ENCODE measurements at regions of chr16 and their contacts with region 1.

Region 1: GRCh38 chr16:22318690-22319358 is 21.6 kb downstream of the POLR3E start:
- H3K4me3 ChIP-seq: no peak overlapping the region
- H3K27ac ChIP-seq: no peak overlapping the region
- H3K4me1 ChIP-seq: no peaks in the 10 kb centered on the region
- CTCF ChIP-seq: peak; percentile 72

Region 2: GRCh38 chr16:21158208-21159110 is 1160.4 kb before region 1 on chr16 and contains the start of gene LDAF1:
- CTCF ChIA-PET with region 1: interaction called, 18 read pairs
- POLR2A ChIA-PET with region 1: no interaction called
- H3K4me3 ChIP-seq: peak within 1 kb of the TSS; percentile 69
- H3K27ac ChIP-seq: no peak within 1 kb of the TSS; the same call in 1 of the 2 replicates
- H3K4me1 ChIP-seq: no peaks in the 10 kb centered on the region
- CTCF ChIP-seq: no peak

Region 3: DNA sequence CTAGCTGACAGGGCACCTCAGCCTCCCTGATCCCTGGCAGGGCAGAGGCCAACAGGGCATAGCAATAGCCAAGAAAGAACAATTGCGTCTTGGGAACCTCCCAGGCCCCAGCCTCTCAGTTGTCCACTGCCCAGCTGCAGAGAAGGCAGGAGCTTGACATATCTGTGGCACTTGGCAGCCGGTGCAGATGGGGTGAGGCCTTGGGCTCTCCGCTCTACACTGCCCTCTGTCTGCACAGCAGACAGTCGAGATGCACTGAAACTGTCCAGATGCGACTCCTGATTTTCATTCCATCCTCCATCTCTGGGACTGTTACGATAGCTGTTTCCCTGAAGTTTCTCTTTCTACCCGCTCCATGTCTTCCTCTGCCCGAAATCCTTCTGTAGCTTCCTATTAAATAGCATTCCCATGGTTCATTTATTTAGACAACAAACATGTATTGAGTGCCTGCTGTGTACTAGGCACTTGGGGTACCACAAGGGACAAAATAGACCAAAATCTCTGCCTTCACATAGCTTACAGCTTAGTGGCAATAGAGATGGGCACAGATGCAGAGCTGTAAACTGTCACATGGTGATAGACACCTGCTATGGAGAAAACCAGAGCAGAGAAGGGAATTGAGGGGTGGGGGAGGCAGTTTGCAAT is 18.3 kb before region 1 on chr16:
- CTCF ChIA-PET with region 1: interaction called, 12 read pairs
- POLR2A ChIA-PET with region 1: interaction called, 3 read pairs
- H3K4me3 ChIP-seq: no peak overlapping the region
- H3K27ac ChIP-seq: no peak overlapping the region
- H3K4me1 ChIP-seq: no peaks in the 10 kb centered on the region
- CTCF ChIP-seq: peak; percentile 59; the same call in 1 of the 2 replicates

Region 4: DNA sequence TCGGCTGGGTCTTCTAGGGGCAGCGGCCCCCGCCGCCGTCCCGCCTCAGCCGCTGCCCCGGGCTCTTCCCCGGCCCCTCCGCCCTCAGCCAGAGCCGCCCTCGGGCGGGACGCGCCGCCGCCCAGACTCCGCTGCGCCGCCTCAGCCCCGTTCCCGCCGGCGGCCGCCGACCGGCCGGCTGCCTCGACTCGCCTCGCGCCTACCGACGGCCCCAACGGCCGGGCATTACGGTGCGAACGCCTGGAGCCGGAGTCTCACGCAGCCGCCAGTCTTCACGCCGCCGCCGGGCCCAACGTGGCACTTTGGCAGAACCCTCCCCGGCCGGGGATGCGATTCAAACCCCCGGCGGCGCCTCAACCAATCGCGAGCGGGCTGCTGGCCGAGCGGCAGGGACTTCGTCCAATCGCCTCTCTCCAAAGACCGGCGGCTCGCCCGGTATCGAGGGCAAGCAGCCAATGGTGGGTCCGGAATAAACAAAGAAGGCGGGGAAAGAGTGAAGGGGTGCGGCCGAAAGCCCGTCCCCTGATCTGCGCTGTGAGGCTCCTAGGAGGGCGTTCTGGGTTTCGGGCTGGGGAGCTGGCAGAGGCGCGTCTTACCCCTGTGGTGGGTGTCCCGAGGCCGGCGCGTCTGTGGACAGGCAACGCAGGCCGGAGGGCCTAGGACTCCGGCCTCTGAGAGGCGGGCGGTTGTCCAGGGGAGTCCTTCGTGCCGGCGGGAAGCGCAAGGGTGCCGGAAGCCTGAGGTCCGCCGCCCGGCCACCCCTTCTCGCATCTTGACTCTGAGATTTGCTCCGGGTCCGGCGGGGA is 55.7 kb after region 1 on chr16 and contains the start of gene CDR2:
- CTCF ChIA-PET with region 1: interaction called, 10 read pairs
- POLR2A ChIA-PET with region 1: no interaction called
- H3K4me3 ChIP-seq: peak within 1 kb of the TSS; percentile 72
- H3K27ac ChIP-seq: peak within 1 kb of the TSS; percentile 56; the same call in 1 of the 2 replicates
- H3K4me1 ChIP-seq: peaks cover 11% of the 10 kb centered on the region; the same call in 1 of the 2 replicates
- CTCF ChIP-seq: peak; percentile 46